Mammary epithelial cell (primary cell): ENCODE measurements at regions of chr4 and their contacts with region 1.

Region 1: DNA sequence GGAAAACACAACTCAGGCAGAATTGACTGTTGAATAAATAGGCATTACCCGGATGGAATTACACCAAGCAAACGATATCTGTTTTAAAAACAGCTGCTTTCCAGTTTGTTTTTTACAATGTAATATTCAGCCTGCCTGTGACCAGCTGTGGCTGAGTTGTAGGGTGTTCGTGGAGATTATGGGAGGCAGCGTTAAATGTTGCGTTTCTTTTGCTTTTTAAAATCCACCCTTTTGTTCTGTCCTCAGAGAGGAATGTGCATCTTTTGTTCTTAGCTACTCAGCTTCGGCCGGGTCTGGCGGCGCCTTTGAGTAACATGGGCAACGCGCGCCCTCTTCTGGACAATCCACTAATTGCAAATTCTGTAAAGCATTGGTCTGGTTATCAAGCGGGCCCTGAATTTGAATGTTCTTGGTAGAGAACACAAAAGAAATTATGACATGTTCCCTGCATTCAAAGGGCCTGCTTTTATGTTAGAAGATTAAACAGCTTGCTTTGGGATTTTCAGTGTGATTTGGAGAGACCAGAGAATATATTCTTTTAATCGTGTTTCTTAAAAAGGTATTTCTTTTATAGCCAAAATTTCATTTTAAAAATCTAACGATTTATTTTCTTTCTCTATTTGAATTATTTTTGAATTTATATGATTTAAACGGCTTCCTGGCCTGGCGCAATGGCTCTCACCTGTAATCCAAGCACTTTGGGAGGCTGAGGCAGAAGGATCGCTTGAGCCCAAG is 76.3 kb upstream of the TRIM2 start:
- DNase-seq: peak; percentile 65
- H3K4me3 ChIP-seq: no peak overlapping the region
- H3K27ac ChIP-seq: no peak overlapping the region
- H3K4me1 ChIP-seq: no peaks in the 10 kb centered on the region
- H3K27me3 ChIP-seq: no peaks in the 10 kb centered on the region
- CTCF ChIP-seq: peak; percentile 72 to 81

Region 2: DNA sequence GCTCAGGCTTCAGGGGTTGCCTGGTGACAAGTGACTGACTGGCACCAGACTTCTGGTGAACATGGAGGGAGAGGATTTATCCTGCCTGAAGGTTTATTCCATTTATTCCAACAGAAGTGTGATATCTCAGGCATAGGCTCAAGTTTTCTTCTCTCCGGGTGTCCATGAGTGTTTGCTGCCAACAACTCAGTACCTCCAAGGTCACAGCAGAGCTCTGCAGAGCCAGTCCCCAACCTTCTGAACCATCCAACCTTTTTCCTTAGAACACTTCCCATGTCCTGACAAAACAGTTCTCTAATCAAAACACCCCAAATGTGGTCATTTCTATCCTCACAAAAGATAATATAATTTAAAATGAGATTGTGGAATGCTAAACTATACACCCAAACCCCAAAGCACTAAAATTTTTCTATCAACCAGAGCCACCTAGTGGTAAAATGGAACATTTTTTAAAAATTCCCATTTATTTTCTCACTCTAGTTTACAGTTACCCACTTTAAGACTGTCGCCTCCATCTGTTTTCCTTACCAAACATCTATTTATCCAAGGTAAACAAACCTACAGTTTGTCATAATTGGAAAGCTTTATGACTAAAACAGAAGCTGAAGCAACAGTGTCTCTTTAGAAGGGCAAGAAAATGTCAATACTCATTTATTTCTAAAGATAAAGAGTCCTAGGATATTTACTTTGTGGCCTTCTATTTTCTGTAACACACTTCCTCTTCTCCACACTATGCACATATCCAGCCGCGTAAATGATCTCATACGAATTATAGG is 487.7 kb before region 1 on chr4:
- CTCF ChIA-PET with region 1: no interaction called
- dilution Hi-C with region 1: no loop called
- in situ Hi-C with region 1: no loop called
- intact Hi-C with region 1: loop called (anchors 10 kb)
- DNase-seq: no peak
- H3K4me3 ChIP-seq: no peak overlapping the region
- H3K27ac ChIP-seq: no peak overlapping the region
- H3K4me1 ChIP-seq: peaks cover 2% of the 10 kb centered on the region
- H3K27me3 ChIP-seq: no peaks in the 10 kb centered on the region
- CTCF ChIP-seq: peak; percentile 41 to 56

Region 3: DNA sequence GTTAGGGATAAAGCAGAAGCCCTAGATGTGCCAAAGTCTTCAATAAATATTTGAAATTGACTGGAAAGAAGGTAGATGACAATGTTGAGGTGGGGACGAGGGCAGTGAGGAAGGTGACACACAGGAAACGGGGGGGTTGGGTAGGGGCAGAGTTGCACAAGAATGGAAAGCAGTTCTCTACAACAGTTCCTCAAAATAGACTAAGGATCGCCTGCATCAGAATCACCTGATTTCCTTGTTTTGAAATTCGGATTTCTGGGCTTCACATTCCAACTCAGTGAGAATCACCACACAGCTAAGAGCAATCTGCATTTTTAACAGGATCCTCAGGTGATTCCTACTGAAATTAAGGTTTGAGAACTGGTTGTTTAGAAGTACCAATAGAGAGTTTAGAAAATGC is 277.6 kb before region 1 on chr4:
- CTCF ChIA-PET with region 1: interaction called, 3 read pairs
- dilution Hi-C with region 1: no loop called
- in situ Hi-C with region 1: loop called (anchors 5 kb)
- intact Hi-C with region 1: loop called (anchors 1 kb)
- DNase-seq: peak; percentile 83
- H3K4me3 ChIP-seq: peak overlapping the region in 1 of 3 experiments; percentile 5
- H3K27ac ChIP-seq: peak overlapping the region; percentile 78
- H3K4me1 ChIP-seq: peaks cover 26% of the 10 kb centered on the region
- H3K27me3 ChIP-seq: no peaks in the 10 kb centered on the region
- CTCF ChIP-seq: no peak

Region 4: DNA sequence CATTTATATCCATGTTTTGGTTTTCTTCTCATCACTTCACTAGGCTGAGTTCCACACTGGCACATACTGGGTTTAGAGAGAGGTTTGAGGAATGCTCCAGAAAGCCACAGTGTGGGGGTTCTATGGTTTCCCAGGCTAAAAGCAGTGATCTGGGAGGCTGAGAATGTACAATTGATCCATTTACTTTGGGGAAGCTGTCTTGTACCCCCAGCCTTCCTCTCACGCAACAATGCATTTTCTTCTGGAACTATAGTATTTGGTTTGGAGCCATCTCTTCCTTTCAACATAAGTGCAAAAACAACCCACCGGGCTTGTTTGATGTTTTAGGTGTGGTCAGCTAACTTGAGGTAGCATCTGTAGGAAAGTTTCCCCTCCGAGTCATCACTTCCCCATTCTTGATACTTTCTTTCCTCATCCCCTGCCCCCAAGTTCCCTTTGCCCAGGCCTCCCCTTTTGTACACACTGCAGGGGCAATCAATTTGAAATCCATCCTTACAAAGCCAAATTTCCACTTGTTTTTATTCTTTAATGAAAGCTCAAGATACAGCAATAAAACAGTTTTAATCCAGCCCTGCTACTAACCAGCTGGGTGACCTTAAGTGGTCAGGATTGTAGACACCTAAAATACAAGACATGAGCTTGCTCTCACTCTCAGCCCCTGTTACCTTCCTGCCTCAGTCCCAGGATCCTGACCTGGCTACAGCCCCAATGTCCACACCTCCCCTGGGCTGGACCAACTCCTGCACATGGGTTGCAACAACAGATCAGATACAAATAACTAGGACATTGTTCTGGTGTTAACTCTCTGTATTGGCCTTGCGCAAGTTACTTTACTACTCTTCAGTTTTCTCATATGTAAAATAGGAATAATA is 82.6 kb before region 1 on chr4:
- CTCF ChIA-PET with region 1: no interaction called
- dilution Hi-C with region 1: no loop called
- in situ Hi-C with region 1: no loop called
- intact Hi-C with region 1: no loop called
- DNase-seq: peak; percentile 65
- H3K4me3 ChIP-seq: no peak overlapping the region
- H3K27ac ChIP-seq: no peak overlapping the region
- H3K4me1 ChIP-seq: peaks cover 13% of the 10 kb centered on the region
- H3K27me3 ChIP-seq: no peaks in the 10 kb centered on the region
- CTCF ChIP-seq: no peak

Region 5: DNA sequence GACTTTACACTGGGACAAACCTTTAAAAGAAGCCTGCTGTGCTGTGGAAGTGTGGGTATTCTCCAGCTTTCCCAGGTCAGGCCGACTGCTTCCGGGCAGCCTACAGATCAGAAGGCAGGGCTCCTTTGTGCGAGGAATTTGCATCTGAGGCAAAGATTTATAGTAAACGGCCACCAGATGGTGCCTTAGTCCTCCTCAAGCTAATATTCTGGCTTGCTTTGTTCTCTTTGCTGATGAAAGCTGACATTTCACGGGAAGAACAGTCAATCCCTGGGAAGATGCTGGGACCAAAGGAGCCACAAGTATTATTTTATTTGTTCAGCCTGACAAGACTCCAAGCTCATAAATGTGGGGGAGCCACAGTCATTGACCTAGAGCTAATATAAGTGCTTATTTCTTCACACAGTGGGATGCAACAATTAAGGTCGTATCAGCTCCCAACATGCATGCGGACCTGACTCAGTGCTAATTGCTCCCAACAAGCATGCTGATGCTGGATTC is 44.4 kb before region 1 on chr4:
- CTCF ChIA-PET with region 1: interaction called, 9 read pairs
- dilution Hi-C with region 1: no loop called
- in situ Hi-C with region 1: loop called (anchors 5 kb)
- intact Hi-C with region 1: loop called (anchors 1 kb)
- DNase-seq: peak; percentile 75
- H3K4me3 ChIP-seq: no peak overlapping the region
- H3K27ac ChIP-seq: no peak overlapping the region
- H3K4me1 ChIP-seq: peaks cover 21% of the 10 kb centered on the region
- H3K27me3 ChIP-seq: no peaks in the 10 kb centered on the region
- CTCF ChIP-seq: peak; percentile 58 to 65

Region 6: GRCh38 chr4:153594210-153594609 is 466.3 kb after region 1 on chr4:
- CTCF ChIA-PET with region 1: no interaction called
- dilution Hi-C with region 1: no loop called
- in situ Hi-C with region 1: loop called in 1 of 2 experiments (anchors 25 kb)
- intact Hi-C with region 1: no loop called
- DNase-seq: no peak
- H3K4me3 ChIP-seq: no peak overlapping the region
- H3K27ac ChIP-seq: no peak overlapping the region
- H3K4me1 ChIP-seq: no peaks in the 10 kb centered on the region
- H3K27me3 ChIP-seq: no peaks in the 10 kb centered on the region
- CTCF ChIP-seq: no peak